Mammary epithelial cell (primary cell): ENCODE measurements at regions of chr1 and their contacts with region 1.

Region 1: GRCh38 chr1:6998267-6998666 is 213.0 kb downstream of the CAMTA1 start:
- DNase-seq: no peak
- H3K4me3 ChIP-seq: no peak overlapping the region
- H3K27ac ChIP-seq: no peak overlapping the region
- H3K4me1 ChIP-seq: no peaks in the 10 kb centered on the region
- H3K27me3 ChIP-seq: no peaks in the 10 kb centered on the region
- CTCF ChIP-seq: no peak

Region 2: GRCh38 chr1:6935361-6935883 is 62.8 kb before region 1 on chr1:
- CTCF ChIA-PET with region 1: no interaction called
- dilution Hi-C with region 1: loop called (anchors 5 kb)
- in situ Hi-C with region 1: no loop called
- intact Hi-C with region 1: no loop called
- DNase-seq: no peak
- H3K4me3 ChIP-seq: no peak overlapping the region
- H3K27ac ChIP-seq: no peak overlapping the region
- H3K4me1 ChIP-seq: peaks cover 4% of the 10 kb centered on the region
- H3K27me3 ChIP-seq: no peaks in the 10 kb centered on the region
- CTCF ChIP-seq: no peak

Region 3: DNA sequence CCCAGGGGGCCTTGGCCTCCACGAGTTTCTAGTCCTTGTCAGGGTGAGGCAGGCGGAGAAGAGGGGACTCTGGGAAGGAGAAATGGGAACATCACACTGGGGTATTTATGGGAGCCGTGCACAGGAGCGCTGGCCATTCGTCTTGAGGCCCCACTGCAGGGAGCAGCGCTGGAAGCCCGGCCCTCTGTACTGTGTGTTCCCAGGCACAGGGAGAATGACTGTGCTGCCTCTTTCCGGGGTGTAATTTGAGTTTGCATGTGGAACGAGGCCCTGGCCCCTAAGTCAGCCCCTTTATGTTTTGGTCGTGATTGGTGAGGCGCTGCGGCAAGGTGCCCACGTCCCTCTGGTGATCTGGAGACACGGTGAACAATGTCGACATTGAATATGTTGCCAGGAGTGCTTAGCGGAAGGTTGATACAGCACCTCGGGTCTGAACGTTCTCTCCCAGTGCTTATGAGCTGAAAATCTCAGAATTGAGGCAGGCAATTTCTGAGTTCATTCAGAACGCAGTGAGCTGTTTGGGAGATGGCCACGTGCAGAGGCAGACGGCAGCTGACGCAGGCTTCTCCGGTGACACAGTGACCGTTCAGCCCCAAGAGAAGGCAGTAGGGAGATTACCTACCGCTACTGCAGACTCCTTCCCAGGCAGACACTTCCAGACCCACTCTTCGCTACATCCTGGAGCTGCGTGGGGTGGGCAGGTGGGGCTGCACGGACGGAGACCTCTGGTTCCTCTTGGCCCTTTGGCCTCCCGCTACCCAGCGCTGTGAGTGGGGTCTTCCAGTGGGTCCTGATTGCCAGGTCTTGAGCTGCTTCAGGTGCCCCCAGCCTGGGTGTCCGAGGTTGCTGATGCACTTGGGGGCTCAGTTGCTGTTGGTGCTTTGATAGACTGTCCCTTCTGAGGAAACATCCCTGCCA is 52.7 kb after region 1 on chr1:
- CTCF ChIA-PET with region 1: no interaction called
- dilution Hi-C with region 1: loop called (anchors 5 kb)
- in situ Hi-C with region 1: no loop called
- intact Hi-C with region 1: no loop called
- DNase-seq: no peak
- H3K4me3 ChIP-seq: no peak overlapping the region
- H3K27ac ChIP-seq: no peak overlapping the region
- H3K4me1 ChIP-seq: peaks cover 5% of the 10 kb centered on the region
- H3K27me3 ChIP-seq: no peaks in the 10 kb centered on the region
- CTCF ChIP-seq: no peak

Region 4: DNA sequence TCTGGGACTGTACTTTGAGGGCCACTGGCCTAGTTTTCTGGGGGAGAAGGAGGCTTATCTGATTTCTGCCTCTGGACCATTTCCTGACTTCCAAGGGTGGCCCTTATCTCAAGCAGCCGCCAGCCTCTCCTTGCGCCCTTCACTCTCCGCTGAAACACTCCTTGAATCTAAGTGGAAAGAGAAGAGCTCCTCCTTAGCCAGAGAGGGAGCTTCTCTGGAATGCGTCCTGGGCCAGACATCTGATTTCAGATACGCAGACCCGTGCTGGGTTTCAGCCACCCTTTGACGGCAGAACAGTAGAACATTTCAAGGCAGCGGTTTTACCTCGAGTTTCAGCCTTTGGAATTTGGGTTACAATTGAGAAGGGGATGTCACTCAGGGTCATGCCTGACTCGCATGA is 95.0 kb after region 1 on chr1:
- CTCF ChIA-PET with region 1: no interaction called
- dilution Hi-C with region 1: loop called (anchors 5 kb)
- in situ Hi-C with region 1: no loop called
- intact Hi-C with region 1: no loop called
- DNase-seq: no peak
- H3K4me3 ChIP-seq: no peak overlapping the region
- H3K27ac ChIP-seq: no peak overlapping the region
- H3K4me1 ChIP-seq: no peaks in the 10 kb centered on the region
- H3K27me3 ChIP-seq: no peaks in the 10 kb centered on the region
- CTCF ChIP-seq: no peak